Naive thymus-derived CD4-positive, alpha-beta T cell (primary cell): ENCODE measurements at regions of chr12 and their contacts with region 1.

Region 1: GRCh38 chr12:8949342-8950220 is at the start of gene M6PR:
- DNase-seq: peak; percentile 76 to 91 (median 89)
- ATAC-seq: peak; percentile 80
- H3K4me3 ChIP-seq: peak within 1 kb of the TSS; percentile 93
- H3K4me3 Mint-ChIP-seq: peak within 1 kb of the TSS; percentile 83 to 99 (median 95)
- H3K27ac ChIP-seq: peak within 1 kb of the TSS; percentile 92
- H3K27ac Mint-ChIP-seq: peak within 1 kb of the TSS; percentile 89 to 99 (median 96)
- H3K4me1 ChIP-seq: peaks cover 41 to 46% of the 10 kb centered on the region in 2 donors
- H3K4me1 Mint-ChIP-seq: peaks cover 47 to 73% (median 70%) of the 10 kb centered on the region in 7 donors
- H3K27me3 ChIP-seq: no peaks in the 10 kb centered on the region
- H3K27me3 Mint-ChIP-seq: no peaks in the 10 kb centered on the region
- total RNA-seq, gene M6PR: 123 to 195 (median 176) TPM

Region 2: DNA sequence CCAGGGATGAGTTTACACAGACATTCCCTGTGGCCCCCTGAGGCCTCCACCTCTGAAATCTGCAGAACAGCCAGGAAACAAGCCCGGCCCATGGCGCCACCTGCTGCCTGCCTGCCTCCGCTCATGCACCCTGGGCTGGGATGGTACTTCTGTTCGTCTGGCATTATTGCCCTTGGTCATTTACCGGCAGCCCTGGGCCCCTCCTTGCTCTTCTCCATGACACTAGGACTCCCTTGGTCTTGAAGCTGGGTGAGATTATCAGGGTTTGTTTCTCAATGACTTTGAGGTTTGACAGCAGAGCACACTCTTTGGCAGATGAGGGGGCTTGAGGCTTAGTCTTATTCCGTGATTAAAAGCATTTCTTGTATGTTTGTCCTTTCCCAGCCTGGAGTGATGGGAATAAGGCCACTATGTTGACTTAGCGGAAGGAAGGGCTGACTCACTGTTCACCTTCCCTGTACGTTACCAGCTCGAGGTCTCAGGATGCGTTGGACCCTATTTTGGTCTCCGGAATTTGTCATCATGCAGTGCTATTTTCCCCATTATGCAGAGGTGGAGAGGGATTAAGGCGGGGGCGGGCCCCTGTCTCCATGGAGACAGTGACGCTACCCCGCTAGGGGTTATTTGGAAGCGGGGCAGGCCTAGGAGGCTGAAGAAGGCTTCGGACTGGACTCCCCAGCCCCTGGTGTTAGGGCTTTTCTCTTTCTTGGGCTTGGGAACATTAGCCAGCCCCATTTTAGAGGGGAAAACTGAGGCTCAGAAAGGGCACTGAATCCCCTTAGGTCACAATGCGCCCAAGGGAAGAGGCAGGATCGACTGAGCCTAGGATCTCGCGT is 1760.8 kb before region 1 on chr12:
- CTCF ChIA-PET with region 1: no interaction called
- POLR2A ChIA-PET with region 1: no interaction called
- intact Hi-C with region 1: no loop called
- DNase-seq: peak; percentile 34 to 64 (median 58)
- ATAC-seq: peak; percentile 40
- H3K4me3 ChIP-seq: peak overlapping the region; percentile 89
- H3K4me3 Mint-ChIP-seq: peak overlapping the region; percentile 92 to 99 (median 97)
- H3K27ac ChIP-seq: peak overlapping the region; percentile 92
- H3K27ac Mint-ChIP-seq: peak overlapping the region; percentile 93 to 99 (median 98)
- H3K4me1 ChIP-seq: peaks cover 10 to 28% of the 10 kb centered on the region in 2 donors
- H3K4me1 Mint-ChIP-seq: peaks cover 18 to 48% (median 40%) of the 10 kb centered on the region in 7 donors
- H3K27me3 ChIP-seq: no peaks in the 10 kb centered on the region
- H3K27me3 Mint-ChIP-seq: no peaks in the 10 kb centered on the region

Region 3: DNA sequence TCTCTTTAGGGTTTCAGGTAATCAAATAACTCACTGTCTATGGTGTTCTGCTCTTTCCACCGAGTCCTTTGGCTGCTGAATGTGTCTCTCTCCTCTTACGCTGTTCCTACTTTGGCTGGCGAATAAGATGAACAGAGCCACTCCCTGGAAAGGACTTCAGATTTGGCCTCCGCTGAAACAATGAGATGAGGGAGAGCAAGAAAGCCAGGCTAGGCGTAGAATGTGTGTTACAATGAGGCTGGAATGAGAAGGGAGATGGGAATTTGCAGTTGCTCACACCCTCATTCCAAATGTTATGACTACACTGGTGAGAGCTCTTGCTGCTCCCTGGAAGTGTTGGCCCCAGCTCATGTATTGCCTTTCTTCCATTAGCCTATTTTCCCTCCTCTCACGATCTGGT is 287.0 kb before region 1 on chr12 and contains the start of gene MFAP5:
- CTCF ChIA-PET with region 1: no interaction called
- POLR2A ChIA-PET with region 1: no interaction called
- intact Hi-C with region 1: loop called in 1 of 2 experiments (anchors 1 kb)
- DNase-seq: no peak
- ATAC-seq: no peak
- H3K4me3 ChIP-seq: no peak within 1 kb of the TSS
- H3K4me3 Mint-ChIP-seq: no peak within 1 kb of the TSS
- H3K27ac ChIP-seq: no peak within 1 kb of the TSS
- H3K27ac Mint-ChIP-seq: no peak within 1 kb of the TSS
- H3K4me1 ChIP-seq: no peaks in the 10 kb centered on the region
- H3K4me1 Mint-ChIP-seq: peaks cover 0 to under 1% (median 0%) of the 10 kb centered on the region in 7 donors
- H3K27me3 ChIP-seq: no peaks in the 10 kb centered on the region
- H3K27me3 Mint-ChIP-seq: peaks cover 5 to 16% (median 8%) of the 10 kb centered on the region in 5 donors
- total RNA-seq, gene MFAP5: not detected

Region 4: GRCh38 chr12:8890313-8891085 is 59.1 kb before region 1 on chr12:
- CTCF ChIA-PET with region 1: interaction called, 3 read pairs
- POLR2A ChIA-PET with region 1: interaction called, 3 read pairs
- intact Hi-C with region 1: loop called in 1 of 2 experiments (anchors 2 kb)
- DNase-seq: peak; percentile 29 to 78 (median 61)
- ATAC-seq: peak; percentile 91
- H3K4me3 ChIP-seq: peak overlapping the region; percentile 71
- H3K4me3 Mint-ChIP-seq: peak overlapping the region; percentile 77 to 100 (median 90)
- H3K27ac ChIP-seq: peak overlapping the region; percentile 59
- H3K27ac Mint-ChIP-seq: peak overlapping the region in 8 of 9 donors; percentile 8 to 92 (median 80)
- H3K4me1 ChIP-seq: no peaks in the 10 kb centered on the region
- H3K4me1 Mint-ChIP-seq: peaks cover 0 to 12% (median 5%) of the 10 kb centered on the region in 7 donors
- H3K27me3 ChIP-seq: no peaks in the 10 kb centered on the region
- H3K27me3 Mint-ChIP-seq: peaks cover 0 to 27% (median 0%) of the 10 kb centered on the region in 5 donors

Region 5: GRCh38 chr12:8960176-8960575 is 10.6 kb after region 1 on chr12:
- CTCF ChIA-PET with region 1: interaction called, 6 read pairs
- POLR2A ChIA-PET with region 1: interaction called, 8 read pairs
- intact Hi-C with region 1: loop called in 1 of 2 experiments (anchors 1 kb)
- DNase-seq: peak in 7 of 9 donors; percentile 42 to 68 (median 57)
- ATAC-seq: peak; percentile 94
- H3K4me3 ChIP-seq: peak overlapping the region; percentile 12
- H3K4me3 Mint-ChIP-seq: peak overlapping the region in 9 of 10 donors; percentile 54 to 84 (median 69)
- H3K27ac ChIP-seq: peak overlapping the region; percentile 52
- H3K27ac Mint-ChIP-seq: peak overlapping the region in 8 of 9 donors; percentile 69 to 99 (median 94)
- H3K4me1 ChIP-seq: peaks cover 46 to 69% of the 10 kb centered on the region in 2 donors
- H3K4me1 Mint-ChIP-seq: peaks cover 6 to 93% (median 75%) of the 10 kb centered on the region in 7 donors
- H3K27me3 ChIP-seq: no peaks in the 10 kb centered on the region
- H3K27me3 Mint-ChIP-seq: peaks cover 0 to 5% (median 0%) of the 10 kb centered on the region in 5 donors

Region 6: DNA sequence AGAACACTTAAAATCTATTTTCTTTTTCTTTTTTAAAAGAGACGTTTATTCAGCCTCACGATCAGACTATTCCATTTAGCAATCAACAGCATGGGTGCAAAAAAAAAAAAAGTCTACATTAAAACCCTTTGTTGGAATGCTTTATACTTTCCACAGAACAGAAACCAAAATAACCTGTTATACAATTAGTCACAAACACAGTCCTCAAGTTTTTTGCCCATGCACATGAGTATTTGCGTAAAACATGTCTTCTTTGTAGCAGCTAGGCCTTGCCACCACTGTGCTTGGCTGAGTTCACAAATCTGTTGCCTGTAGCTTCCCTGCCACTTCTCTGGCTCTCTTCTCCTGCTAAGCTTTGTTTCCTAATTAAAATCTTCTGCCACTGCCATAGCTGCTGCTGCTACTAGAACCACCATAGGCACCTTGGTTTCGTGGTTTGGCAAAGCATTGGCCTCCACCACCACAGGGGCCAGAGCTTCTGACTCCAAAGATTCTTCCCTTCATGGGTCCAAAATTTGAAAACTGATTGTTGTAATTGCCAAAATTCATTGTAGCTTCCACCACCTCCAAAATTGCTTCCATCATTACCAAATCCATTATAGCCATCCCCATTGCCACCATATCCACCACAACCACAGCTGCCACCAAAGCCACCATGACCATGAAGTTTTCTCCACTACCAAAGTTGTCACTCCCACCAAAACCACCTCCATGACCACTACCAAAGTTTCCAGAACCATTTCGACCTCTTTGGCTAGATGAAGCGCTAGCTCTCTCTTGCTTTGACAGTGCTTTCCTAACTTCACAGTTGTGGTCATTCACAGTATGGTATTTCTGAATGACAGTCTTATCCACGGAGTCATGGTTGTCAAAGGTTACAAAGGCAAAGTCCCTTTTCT is 77.8 kb after region 1 on chr12:
- CTCF ChIA-PET with region 1: interaction called, 287 read pairs
- POLR2A ChIA-PET with region 1: interaction called, 148 read pairs
- intact Hi-C with region 1: loop called (anchors 1 kb)
- DNase-seq: peak in 1 of 9 donors; percentile 46
- ATAC-seq: no peak
- H3K4me3 ChIP-seq: no peak overlapping the region
- H3K4me3 Mint-ChIP-seq: peak overlapping the region; percentile 21 to 69 (median 60)
- H3K27ac ChIP-seq: peak overlapping the region; percentile 73
- H3K27ac Mint-ChIP-seq: peak overlapping the region in 3 of 9 donors; percentile 24 to 97 (median 94)
- H3K4me1 ChIP-seq: peaks cover 53 to 69% of the 10 kb centered on the region in 2 donors
- H3K4me1 Mint-ChIP-seq: peaks cover 20 to 57% (median 49%) of the 10 kb centered on the region in 7 donors
- H3K27me3 ChIP-seq: no peaks in the 10 kb centered on the region
- H3K27me3 Mint-ChIP-seq: peaks cover 0 to 2% (median 0%) of the 10 kb centered on the region in 5 donors

Region 7: DNA sequence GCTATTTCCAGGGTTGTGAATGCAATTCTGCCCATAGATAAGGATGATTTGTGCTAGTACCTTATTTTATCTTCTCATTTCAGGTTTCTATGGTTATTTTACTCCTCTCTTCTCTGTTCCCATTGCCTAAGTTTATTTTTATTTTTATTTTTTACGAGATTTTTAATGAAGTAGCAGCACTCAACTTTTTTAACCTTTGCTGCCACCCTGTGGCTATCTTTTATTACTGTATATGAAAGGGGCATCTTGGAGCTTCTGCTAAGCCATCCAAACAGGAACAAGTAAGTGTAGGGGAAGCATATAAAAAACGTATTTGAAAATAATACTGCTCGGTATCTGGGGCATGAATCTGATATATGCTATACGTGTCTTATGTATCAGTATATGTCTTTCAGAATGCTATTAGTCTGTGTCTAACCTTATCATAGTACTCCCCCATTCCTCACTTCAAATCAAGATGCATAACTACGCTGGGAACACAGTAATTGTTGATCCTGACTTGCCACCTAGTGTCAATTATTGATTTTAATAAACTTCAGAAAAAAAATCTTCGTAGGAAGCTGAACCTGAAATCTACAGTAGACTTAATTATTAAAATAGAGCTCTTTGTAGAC is 100.0 kb after region 1 on chr12:
- CTCF ChIA-PET with region 1: interaction called, 158 read pairs
- POLR2A ChIA-PET with region 1: interaction called, 26 read pairs
- intact Hi-C with region 1: loop called (anchors 1 kb)
- DNase-seq: peak in 7 of 9 donors; percentile 41 to 71 (median 57)
- ATAC-seq: peak; percentile 84
- H3K4me3 ChIP-seq: no peak overlapping the region
- H3K4me3 Mint-ChIP-seq: no peak overlapping the region
- H3K27ac ChIP-seq: no peak overlapping the region
- H3K27ac Mint-ChIP-seq: peak overlapping the region in 4 of 9 donors; percentile 31 to 70 (median 40)
- H3K4me1 ChIP-seq: peaks cover 5 to 6% of the 10 kb centered on the region in 2 donors
- H3K4me1 Mint-ChIP-seq: peaks cover 2 to 32% (median 13%) of the 10 kb centered on the region in 7 donors
- H3K27me3 ChIP-seq: no peaks in the 10 kb centered on the region
- H3K27me3 Mint-ChIP-seq: peaks cover 0 to 4% (median 0%) of the 10 kb centered on the region in 5 donors

Region 8: GRCh38 chr12:10182354-10183061 is 1232.9 kb after region 1 on chr12:
- CTCF ChIA-PET with region 1: no interaction called
- POLR2A ChIA-PET with region 1: no interaction called
- intact Hi-C with region 1: no loop called
- DNase-seq: no peak
- ATAC-seq: peak; percentile 84
- H3K4me3 ChIP-seq: no peak overlapping the region
- H3K4me3 Mint-ChIP-seq: no peak overlapping the region
- H3K27ac ChIP-seq: no peak overlapping the region
- H3K27ac Mint-ChIP-seq: no peak overlapping the region
- H3K4me1 ChIP-seq: no peaks in the 10 kb centered on the region
- H3K4me1 Mint-ChIP-seq: peaks cover 0 to 7% (median 0%) of the 10 kb centered on the region in 7 donors
- H3K27me3 ChIP-seq: no peaks in the 10 kb centered on the region
- H3K27me3 Mint-ChIP-seq: peaks cover 5 to 35% (median 17%) of the 10 kb centered on the region in 5 donors